ENCODE measurements at regions of chr5 and their contacts with region 1.

Region 1: GRCh38 chr5:112210430-112211005 is 208.6 kb downstream of the EPB41L4A start:
- DNase-seq: no peak

Region 2: DNA sequence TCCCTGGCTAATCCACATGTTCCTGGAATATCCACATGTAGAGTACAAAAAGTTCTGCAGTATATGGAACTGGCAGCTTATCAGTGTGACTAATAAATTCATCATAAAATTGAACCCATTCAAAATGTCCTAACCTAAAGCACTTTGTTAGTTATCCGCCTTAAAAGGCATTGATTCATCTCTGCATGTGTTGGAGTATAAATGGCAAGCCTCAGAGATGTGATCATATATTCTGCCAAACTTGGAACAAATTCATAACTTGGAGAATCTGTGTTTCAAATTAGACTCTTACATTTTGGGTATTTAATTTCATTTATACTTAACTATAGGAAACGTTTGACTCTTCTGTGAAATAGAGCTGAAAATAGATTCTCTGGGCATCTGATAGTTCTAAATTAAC is 428.3 kb before region 1 on chr5:
- intact Hi-C with region 1: no loop called
- DNase-seq: no peak

Region 3: DNA sequence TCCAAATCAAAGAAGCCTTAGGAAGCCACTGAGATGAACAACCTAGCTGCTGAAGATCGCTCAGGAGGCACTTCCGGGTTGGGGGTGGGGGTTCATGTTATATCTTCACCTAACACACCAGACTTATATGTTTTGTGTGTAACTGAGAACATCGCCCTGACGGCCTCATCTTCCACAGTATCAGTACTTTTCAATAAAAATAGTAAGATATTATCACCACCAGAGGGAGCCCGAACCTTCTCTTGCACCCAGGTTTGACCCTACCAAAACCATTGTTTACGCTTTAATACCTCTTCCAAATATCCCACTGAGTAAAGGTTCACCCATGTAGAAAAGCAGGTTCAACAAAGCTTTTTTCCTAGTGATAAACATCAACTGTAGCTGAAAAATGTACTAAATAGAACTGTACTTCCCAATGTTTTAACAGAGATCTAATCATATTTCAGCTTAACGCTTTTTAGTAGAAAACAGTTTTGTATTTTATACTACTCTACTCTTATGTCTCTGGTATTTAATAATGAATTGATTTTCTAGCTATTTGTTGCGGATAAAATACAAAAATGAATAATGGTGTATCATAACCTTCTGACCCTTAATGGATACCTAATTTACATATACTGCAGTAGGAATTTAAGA is 35.4 kb before region 1 on chr5:
- intact Hi-C with region 1: no loop called
- DNase-seq: no peak

Region 4: DNA sequence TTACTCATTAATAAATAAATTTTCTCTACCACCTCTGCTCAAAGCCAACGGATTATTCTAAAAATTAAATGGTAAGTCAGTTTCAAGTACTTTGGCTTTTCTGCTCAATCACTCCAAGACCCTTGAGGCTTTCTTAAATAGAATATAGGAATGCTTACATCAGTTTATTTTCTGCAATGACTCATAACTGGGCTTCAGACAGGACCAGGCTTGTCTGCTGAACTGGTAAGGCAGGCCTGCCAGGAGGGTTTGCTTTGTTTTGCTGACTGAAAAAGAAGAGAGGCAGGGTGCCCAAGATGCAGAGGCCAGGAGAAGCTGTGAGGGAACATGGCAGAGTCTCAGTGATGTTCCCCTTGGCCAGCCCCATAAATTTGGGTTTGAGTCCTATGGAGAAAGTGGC is 268.9 kb after region 1 on chr5:
- intact Hi-C with region 1: no loop called
- DNase-seq: no peak

Region 5: DNA sequence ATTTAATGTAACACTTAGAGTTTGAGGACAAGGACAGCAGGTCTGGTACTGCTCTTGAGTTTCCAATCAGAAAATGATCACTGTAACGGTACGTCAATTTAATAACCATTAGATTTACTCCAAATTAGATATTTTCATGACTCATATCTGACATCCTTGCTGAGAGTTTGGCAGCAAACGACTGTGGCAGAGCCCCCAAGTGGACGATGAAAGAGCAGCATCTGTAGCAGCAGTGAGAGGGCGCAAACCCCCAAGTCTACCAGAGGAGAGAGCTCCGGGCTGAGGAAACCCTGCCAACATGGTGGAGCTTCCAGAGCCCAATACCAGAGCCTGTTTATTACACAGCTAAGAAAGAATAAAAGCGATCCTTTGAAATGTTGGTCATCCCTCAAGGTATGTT is 281.8 kb after region 1 on chr5:
- intact Hi-C with region 1: loop called (anchors 10 kb)
- DNase-seq: no peak